ENCODE measurements at regions of chr5 and their contacts with region 1.

Region 1: DNA sequence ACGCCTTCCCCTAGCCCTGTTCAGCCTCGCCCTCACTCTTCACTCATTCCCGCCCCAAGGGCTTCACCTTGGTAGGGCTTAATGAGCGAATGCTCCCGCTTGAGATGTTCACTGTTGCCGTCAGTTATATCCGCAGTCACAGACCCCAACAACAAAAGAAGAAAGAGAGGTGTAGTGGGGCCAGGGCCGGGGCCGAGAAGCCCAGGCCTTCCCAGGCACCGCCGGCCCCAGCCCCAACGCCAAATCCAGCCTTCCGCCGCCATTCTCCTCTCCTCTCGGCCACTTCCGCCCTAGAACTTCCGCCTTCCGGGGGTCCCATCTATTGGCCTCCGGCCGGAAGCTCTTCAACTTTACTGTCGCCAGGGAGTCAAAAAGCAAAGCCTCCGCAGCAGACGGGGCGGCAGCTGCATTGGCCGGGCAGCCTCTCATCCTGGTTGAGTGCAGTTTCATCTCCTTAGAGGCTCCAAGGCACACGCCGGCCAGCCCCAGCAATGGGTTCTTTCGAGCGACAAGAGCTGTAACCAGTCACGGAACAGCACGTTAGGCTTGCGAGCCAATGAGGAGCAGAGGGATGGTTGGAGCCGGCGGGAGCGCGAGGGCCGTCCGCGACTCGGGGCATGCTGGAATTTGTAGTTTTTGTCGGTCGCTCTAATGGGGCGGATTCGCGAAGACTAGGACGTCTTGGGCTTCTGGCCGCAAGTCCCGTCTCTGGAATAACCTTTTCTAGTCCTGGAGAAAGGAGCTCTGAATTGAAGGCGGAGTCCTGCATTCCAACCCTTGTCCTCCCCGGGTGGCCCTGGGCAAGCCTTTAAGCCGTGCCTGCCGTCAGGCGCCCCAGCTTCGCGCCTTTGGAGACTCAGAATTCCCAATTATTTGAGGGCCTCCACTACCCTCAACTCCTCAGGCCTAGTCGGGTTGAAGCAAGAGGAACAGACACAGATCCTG is at the start of gene LMAN2:
- DNase-seq: peak; percentile 80 to 90
- H3K4me3 ChIP-seq: peak within 1 kb of the TSS; percentile 80 to 100 (median 94)
- H3K27ac ChIP-seq: peak within 1 kb of the TSS; percentile 94
- H3K4me1 ChIP-seq: peaks cover 0 to 13% (median 4%) of the 10 kb centered on the region in 4 experiments; a peak in 3 of 7 replicates
- H3K27me3 ChIP-seq: 0 out of 7 replicates have a peak, but pooled peaks cover 0 to 5% (median 0%) of the 10 kb centered on the region in 4 experiments
- CTCF ChIP-seq: no peak
- EP300 ChIP-seq: no peak
- POLR2A ChIP-seq: peak in 1 of 2 experiments; percentile 83; a peak in 2 of 3 replicates
- RAD21 ChIP-seq: no peak
- total RNA-seq, gene LMAN2: 116 and 119 TPM in 2 replicates

Region 2: GRCh38 chr5:177317959-177318377 is 33.7 kb before region 1 on chr5:
- CTCF ChIA-PET with region 1: interaction called, 39 read pairs
- POLR2A ChIA-PET with region 1: interaction called, 7 read pairs
- DNase-seq: peak in 1 of 2 experiments; percentile 87
- H3K4me3 ChIP-seq: no peak overlapping the region
- H3K27ac ChIP-seq: no peak overlapping the region
- H3K4me1 ChIP-seq: peaks cover 0 to 4% (median 1%) of the 10 kb centered on the region in 4 experiments; a peak in 4 of 7 replicates
- H3K27me3 ChIP-seq: no peaks in the 10 kb centered on the region
- CTCF ChIP-seq: peak in 2 of 3 experiments; percentile 85 to 89; a peak in 3 of 4 replicates
- EP300 ChIP-seq: no peak
- POLR2A ChIP-seq: no peak
- RAD21 ChIP-seq: peak; percentile 87 to 90

Region 3: GRCh38 chr5:177336112-177336511 is 15.5 kb before region 1 on chr5:
- CTCF ChIA-PET with region 1: interaction called, 11 read pairs
- POLR2A ChIA-PET with region 1: interaction called, 7 read pairs
- DNase-seq: no peak
- H3K4me3 ChIP-seq: no peak overlapping the region
- H3K27ac ChIP-seq: peak overlapping the region; percentile 64; the same call in 1 of the 2 replicates
- H3K4me1 ChIP-seq: peaks cover 0 to 5% (median 3%) of the 10 kb centered on the region in 4 experiments; a peak in 4 of 7 replicates
- H3K27me3 ChIP-seq: no peaks in the 10 kb centered on the region
- CTCF ChIP-seq: peak in 2 of 3 experiments; percentile 39 to 74; a peak in 3 of 4 replicates
- EP300 ChIP-seq: no peak
- POLR2A ChIP-seq: no peak
- RAD21 ChIP-seq: peak; percentile 13 to 27; a peak in 1 of 4 replicates

Region 4: GRCh38 chr5:177362610-177363507 is 11.2 kb after region 1 on chr5:
- CTCF ChIA-PET with region 1: interaction called, 142 read pairs
- POLR2A ChIA-PET with region 1: interaction called, 66 read pairs
- DNase-seq: peak in 1 of 2 experiments; percentile 89
- H3K4me3 ChIP-seq: peak overlapping the region; percentile 43 to 69 (median 48)
- H3K27ac ChIP-seq: no peak overlapping the region
- H3K4me1 ChIP-seq: peaks cover 2 to 27% (median 22%) of the 10 kb centered on the region in 4 experiments
- H3K27me3 ChIP-seq: peaks cover 0 to 11% (median 9%) of the 10 kb centered on the region in 4 experiments; a peak in 4 of 7 replicates
- CTCF ChIP-seq: no peak
- EP300 ChIP-seq: no peak
- POLR2A ChIP-seq: 0 out of 3 replicates have a peak, but pooled peaks of 1 of the 2 experiments have one; percentile 16
- RAD21 ChIP-seq: no peak

Region 5: GRCh38 chr5:177370488-177371119 is 18.9 kb after region 1 on chr5:
- CTCF ChIA-PET with region 1: interaction called, 142 read pairs
- POLR2A ChIA-PET with region 1: interaction called, 66 read pairs
- DNase-seq: peak; percentile 93 to 99
- H3K4me3 ChIP-seq: peak overlapping the region; percentile 23 to 63 (median 58); a peak in 6 of 8 replicates
- H3K27ac ChIP-seq: 0 out of 2 replicates have a peak overlapping the region, but pooled peaks have one; percentile 60
- H3K4me1 ChIP-seq: peaks cover 8 to 36% (median 31%) of the 10 kb centered on the region in 4 experiments
- H3K27me3 ChIP-seq: peaks cover 1 to 14% (median 12%) of the 10 kb centered on the region in 4 experiments; a peak in 4 of 7 replicates
- CTCF ChIP-seq: peak in 2 of 3 experiments; percentile 79 to 98; a peak in 3 of 4 replicates
- EP300 ChIP-seq: no peak
- POLR2A ChIP-seq: 0 out of 3 replicates have a peak, but pooled peaks of 1 of the 2 experiments have one; percentile 16
- RAD21 ChIP-seq: peak; percentile 66 to 75

Measured in H1 (cell line).